HepG2 (cell line): ENCODE measurements at regions of chr20 and their contacts with region 1.

Region 1: DNA sequence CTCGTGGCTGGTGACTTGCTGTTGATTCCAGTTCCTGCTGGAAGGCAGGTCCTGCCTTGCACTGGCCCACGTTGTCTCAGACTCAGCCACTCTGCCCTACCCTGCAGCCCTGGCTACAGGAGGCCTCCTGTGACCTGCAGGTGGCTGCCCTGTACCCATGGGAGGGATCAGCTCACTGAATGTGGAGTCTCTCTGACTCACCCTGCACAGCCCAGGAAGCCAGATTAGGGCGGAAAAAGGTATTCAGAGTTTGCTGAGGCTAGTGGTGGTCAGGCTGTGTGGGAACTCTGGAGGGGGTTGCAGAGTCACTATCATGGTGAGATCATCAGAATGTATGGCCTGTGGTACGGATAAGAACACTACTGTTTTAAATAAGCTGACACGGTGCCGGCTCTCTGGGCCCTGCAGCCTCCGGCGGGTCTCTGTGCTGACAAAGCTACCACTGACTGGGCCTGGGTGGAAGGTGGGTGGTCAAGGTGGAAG is 24.7 kb upstream of the PYGB start:
- DNase-seq: peak; percentile 91
- ATAC-seq: peak; percentile 81
- H3K4me3 ChIP-seq: no peak overlapping the region
- H3K27ac ChIP-seq: peak overlapping the region; percentile 54
- H3K4me1 ChIP-seq: peaks cover 48% of the 10 kb centered on the region
- H3K27me3 ChIP-seq: no peaks in the 10 kb centered on the region
- CTCF ChIP-seq: peak; percentile 78
- EP300 ChIP-seq: no peak
- POLR2A ChIP-seq: no peak
- RAD21 ChIP-seq: peak; percentile 60; the same call in 1 of the 2 replicates

Region 2: DNA sequence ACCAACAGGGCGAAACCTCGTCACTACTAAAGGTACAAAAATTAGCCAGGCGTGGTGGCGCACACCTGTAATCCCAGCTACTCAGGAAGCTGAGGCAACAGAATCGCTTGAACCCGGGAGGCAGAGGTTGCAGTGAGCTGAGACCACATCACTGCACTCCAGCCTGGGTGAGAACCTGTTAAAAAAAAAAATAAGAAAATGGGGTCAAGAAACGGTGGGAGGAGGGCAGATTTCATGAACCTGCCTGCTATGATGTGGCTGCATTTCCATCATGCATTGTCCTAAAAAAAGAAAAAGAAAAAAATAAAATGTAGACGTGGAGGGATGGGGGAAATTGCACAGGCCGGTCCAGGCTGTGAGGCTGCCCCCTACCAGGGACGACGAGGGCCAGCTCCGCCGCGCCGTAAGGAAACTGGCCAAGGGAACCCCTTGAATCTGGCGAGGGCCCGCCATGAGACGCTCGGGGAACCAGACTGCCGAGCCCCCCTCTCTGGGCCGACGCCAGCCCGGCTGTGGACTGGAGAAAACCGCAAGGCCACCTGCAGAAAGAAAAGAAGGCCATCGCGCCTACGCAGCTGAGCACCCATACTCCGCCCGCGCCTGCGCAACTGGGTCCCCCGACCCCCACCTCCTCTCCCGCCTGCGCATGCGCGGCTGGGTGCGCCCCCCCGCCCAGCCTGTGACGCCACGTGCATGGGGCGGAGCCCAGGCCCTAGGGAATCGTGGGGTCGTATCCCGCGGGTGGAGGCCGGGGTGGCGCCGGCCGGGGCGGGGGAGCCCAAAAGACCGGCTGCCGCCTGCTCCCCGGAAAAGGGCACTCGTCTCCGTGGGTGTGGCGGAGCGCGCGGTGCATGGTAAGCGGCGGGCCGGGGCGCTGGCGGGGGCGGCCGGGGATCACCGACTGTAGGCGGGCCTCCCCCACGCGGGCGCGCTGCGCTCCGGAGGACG is 27.9 kb before region 1 on chr20 and contains the start of gene ENTPD6:
- CTCF ChIA-PET with region 1: no interaction called
- POLR2A ChIA-PET with region 1: interaction called, 15 read pairs
- in situ Hi-C with region 1: no loop called
- intact Hi-C with region 1: loop called (anchors 2 kb)
- DNase-seq: peak; percentile 90
- ATAC-seq: peak; percentile 81
- H3K4me3 ChIP-seq: peak within 1 kb of the TSS; percentile 82 to 97 (median 93)
- H3K27ac ChIP-seq: peak within 1 kb of the TSS; percentile 67
- H3K4me1 ChIP-seq: peaks cover 48% of the 10 kb centered on the region
- H3K27me3 ChIP-seq: peaks cover 2 to 8% of the 10 kb centered on the region in 2 experiments; a peak in 1 of 5 replicates
- CTCF ChIP-seq: peak; percentile 71
- EP300 ChIP-seq: no peak
- POLR2A ChIP-seq: peak; percentile 89 to 97
- RAD21 ChIP-seq: peak; percentile 47
- total RNA-seq, gene ENTPD6: 98.4 and 164 TPM in 2 replicates

Region 3: GRCh38 chr20:25237610-25238318 is 14.5 kb after region 1 on chr20:
- CTCF ChIA-PET with region 1: no interaction called
- POLR2A ChIA-PET with region 1: interaction called, 19 read pairs
- in situ Hi-C with region 1: no loop called
- intact Hi-C with region 1: no loop called
- DNase-seq: peak; percentile 90
- ATAC-seq: peak; percentile 56
- H3K4me3 ChIP-seq: no peak overlapping the region
- H3K27ac ChIP-seq: no peak overlapping the region
- H3K4me1 ChIP-seq: peaks cover 64% of the 10 kb centered on the region
- H3K27me3 ChIP-seq: peaks cover 0 to 26% of the 10 kb centered on the region in 2 experiments; a peak in 4 of 5 replicates
- CTCF ChIP-seq: no peak
- EP300 ChIP-seq: peak in 1 of 2 experiments; percentile 73; a peak in 2 of 4 replicates
- POLR2A ChIP-seq: no peak
- RAD21 ChIP-seq: no peak